Activated naive CD4-positive, alpha-beta T cell treated with anti-CD3 and anti-CD28 coated beads, Interleukin-2, amount 10 ng/mL, durations not matched to agents 7 days and 5 days (primary cell): ENCODE measurements at regions of chr1 and their contacts with region 1.

Region 1: DNA sequence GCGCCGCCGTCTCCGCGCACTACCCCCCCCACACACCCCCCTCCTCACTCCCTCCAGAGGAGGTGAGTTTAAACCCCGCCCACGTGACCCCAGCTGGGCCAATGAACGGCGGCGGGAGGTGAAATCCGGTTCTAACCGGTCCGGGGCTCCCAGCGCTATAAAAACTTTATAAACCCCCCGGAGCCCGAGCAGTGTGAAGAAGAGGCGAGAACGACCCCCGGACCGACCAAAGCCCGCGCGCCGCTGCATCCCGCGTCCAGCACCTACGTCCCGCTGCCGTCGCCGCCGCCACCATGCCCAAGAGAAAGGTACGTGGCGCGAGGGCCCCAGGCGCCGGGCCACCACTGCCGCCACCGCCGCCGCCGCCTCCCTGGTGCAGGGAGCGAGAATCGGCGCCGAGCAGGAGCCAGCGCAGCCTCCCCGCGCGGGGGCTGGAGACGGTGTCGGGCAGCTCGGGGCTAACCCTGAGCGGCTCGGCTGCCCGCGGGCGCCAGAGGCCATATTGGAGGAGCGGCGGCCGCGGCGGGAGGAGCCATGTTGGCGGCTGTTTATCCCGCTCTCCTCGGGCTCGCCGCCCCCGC is at the start of gene HMGN2:
- DNase-seq: peak; percentile 95
- H3K4me3 Mint-ChIP-seq: peak within 1 kb of the TSS; percentile 93
- H3K27ac Mint-ChIP-seq: peak within 1 kb of the TSS; percentile 99
- H3K4me1 Mint-ChIP-seq: peaks cover 57% of the 10 kb centered on the region
- H3K27me3 Mint-ChIP-seq: no peaks in the 10 kb centered on the region

Region 2: GRCh38 chr1:26450908-26451307 is 21.5 kb before region 1 on chr1:
- CTCF ChIA-PET with region 1: interaction called, 11 read pairs
- DNase-seq: no peak
- H3K4me3 Mint-ChIP-seq: no peak overlapping the region
- H3K27ac Mint-ChIP-seq: no peak overlapping the region
- H3K4me1 Mint-ChIP-seq: no peaks in the 10 kb centered on the region
- H3K27me3 Mint-ChIP-seq: no peaks in the 10 kb centered on the region

Region 3: GRCh38 chr1:26459573-26460031 is 12.8 kb before region 1 on chr1:
- CTCF ChIA-PET with region 1: interaction called, 33 read pairs
- DNase-seq: no peak
- H3K4me3 Mint-ChIP-seq: no peak overlapping the region
- H3K27ac Mint-ChIP-seq: no peak overlapping the region
- H3K4me1 Mint-ChIP-seq: no peaks in the 10 kb centered on the region
- H3K27me3 Mint-ChIP-seq: no peaks in the 10 kb centered on the region